ENCODE measurements at regions of chr1 and their contacts with region 1.

Region 1: DNA sequence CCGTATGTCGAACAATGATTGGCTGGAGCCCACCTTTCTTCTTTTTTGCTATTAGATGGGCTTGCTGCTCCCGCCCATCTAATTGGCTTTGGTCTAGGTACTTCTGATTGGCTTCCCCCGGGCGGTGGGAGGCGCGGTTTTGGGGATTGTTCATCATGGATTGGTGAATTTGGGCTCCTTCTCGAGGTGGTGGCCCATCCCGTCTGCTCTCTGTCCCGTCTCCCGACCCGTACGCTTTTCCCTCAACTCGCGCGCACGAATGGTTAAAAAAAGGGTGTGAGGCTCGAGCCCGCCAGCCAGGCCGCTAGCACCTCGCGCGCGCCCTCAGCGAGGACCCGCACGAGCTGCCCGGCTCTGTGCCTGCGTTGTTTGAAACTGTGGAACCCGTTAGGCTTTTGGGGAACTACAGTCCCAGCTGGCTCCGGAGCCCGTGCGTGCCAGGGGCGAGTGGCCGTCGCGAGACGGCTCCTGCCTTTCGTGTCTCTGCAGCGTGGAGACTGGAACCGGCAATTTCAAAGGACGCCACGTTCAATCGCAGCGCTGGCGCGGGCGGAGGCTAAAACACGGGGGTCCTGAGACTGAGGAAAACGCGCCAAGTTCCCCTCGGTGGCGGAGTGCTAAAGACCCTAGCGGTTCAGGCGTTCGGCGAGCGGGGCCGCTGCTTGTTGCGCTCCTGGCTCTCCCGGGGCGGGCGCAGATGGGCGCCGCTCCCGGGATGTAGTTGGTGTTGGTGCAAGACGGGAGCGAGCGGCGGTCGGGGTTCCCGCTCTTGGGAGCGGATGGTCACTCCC is at the start of gene USP1:
- DNase-seq: peak; percentile 99
- ATAC-seq: peak; percentile 79
- H3K4me3 ChIP-seq: peak within 1 kb of the TSS; percentile 87 to 98 (median 97)
- H3K4me3 Mint-ChIP-seq: peak within 1 kb of the TSS; percentile 98
- H3K27ac ChIP-seq: peak within 1 kb of the TSS; percentile 97
- H3K27ac Mint-ChIP-seq: peak within 1 kb of the TSS; percentile 100
- H3K4me1 ChIP-seq: peaks cover 20 to 28% of the 10 kb centered on the region in 2 donors
- H3K4me1 Mint-ChIP-seq: peaks cover 47% of the 10 kb centered on the region
- H3K27me3 ChIP-seq: no peaks in the 10 kb centered on the region
- H3K27me3 Mint-ChIP-seq: no peaks in the 10 kb centered on the region
- CTCF ChIP-seq: no peak
- total RNA-seq, gene USP1: 32.5 and 32.7 TPM in 2 replicates

Region 2: DNA sequence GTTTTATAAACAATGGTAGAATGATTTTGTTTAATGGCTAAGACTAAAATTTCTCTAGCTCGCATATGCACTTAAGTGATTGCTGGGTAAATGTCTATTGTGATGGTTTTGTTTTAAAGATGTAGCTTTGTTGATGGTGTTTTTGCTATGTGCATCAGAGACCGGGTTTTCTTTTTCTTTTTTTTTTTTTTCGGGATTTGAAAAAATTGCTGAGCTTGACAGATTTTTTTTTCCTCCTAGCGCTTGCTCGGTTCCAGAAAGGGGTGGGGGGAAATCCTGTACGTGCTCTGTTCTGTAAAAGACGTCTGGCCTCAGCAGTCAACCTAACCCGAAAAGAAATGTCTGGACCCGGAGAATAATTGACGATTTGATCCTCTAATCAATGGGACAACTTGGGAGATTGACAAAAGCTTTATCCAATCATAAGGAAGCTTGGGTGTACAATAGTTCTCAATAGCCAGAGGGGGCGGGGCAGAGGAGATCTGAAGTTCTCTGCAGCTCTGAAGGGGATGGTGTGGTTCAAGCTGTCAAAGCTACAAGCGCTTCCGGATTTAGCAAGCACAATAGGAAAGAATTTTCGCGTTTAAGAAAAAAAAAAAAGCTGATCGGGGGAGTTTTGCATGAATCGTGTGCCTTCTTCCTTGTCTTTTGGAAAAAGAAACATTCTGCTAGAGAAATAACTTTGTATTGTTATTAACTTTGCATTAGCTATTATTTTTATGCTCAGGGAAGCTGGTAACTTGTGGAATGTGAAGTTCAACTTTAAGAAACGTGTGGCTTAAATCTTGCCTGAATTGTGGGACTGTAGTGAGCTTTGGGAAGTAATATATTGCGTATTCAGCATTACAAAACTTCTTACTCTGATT is 1358.8 kb before region 1 on chr1:
- CTCF ChIA-PET with region 1: no interaction called
- POLR2A ChIA-PET with region 1: interaction called, 6 read pairs
- intact Hi-C with region 1: loop called (anchors 5 kb)
- DNase-seq: peak; percentile 91
- ATAC-seq: peak; percentile 42
- H3K4me3 ChIP-seq: peak overlapping the region; percentile 54 to 98 (median 67)
- H3K4me3 Mint-ChIP-seq: peak overlapping the region; percentile 92
- H3K27ac ChIP-seq: peak overlapping the region; percentile 71 to 83
- H3K27ac Mint-ChIP-seq: peak overlapping the region; percentile 75
- H3K4me1 ChIP-seq: peaks cover 33% of the 10 kb centered on the region in 2 donors
- H3K4me1 Mint-ChIP-seq: peaks cover 36% of the 10 kb centered on the region
- H3K27me3 ChIP-seq: peaks cover 0 to 40% (median 33%) of the 10 kb centered on the region in 4 experiments
- H3K27me3 Mint-ChIP-seq: peaks cover 35% of the 10 kb centered on the region
- CTCF ChIP-seq: no peak

Region 3: DNA sequence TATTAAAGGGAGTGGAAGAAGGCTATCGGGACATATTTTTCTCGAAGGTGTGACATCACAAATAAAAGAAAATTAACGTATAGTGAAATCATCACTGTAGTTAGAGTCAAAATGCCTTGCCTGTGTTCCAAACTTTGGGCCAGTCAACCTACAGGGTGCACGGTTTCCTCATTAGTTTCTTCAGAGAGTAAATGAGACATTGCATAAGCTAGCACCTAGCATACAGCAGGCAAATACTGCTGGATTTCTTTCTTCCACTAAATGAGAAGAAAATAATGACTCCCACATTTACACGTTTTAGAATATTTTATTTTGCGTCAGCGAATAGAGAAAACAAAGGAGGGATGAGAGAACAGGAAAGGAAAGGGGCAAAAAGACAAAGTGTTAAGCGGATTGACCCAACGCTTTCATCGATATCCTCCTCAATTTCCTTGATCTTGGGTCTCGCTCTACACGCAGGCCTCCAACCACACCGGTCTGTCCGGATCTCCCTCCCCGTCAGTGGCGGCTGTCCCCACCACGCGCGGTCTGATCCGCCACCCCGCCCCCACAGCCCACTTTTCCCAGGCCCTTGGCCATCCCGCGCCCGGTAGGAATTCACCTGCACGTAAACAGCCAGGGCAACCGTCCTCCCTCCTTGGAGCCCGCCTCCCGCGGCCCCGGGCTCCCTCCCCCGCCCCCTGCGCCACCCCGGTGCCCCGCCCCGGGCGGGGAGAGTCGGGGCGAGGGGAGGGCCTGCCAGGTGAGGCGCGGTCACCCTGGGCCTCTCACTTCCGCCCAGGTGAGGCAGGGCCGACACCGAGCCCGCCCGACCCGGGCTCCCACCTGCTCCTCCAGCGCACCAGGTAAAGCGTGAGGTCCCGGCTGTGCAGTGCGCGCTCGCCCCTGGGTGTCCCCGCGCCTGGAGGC is 694.7 kb before region 1 on chr1 and contains the start of gene PATJ:
- CTCF ChIA-PET with region 1: no interaction called
- POLR2A ChIA-PET with region 1: no interaction called
- intact Hi-C with region 1: loop called (anchors 5 kb)
- DNase-seq: peak; percentile 68
- ATAC-seq: peak; percentile 82
- H3K4me3 ChIP-seq: peak within 1 kb of the TSS; percentile 54 to 78 (median 75)
- H3K4me3 Mint-ChIP-seq: peak within 1 kb of the TSS; percentile 97
- H3K27ac ChIP-seq: peak within 1 kb of the TSS; percentile 50 to 55
- H3K27ac Mint-ChIP-seq: peak within 1 kb of the TSS; percentile 93
- H3K4me1 ChIP-seq: peaks cover 9 to 13% of the 10 kb centered on the region in 2 donors
- H3K4me1 Mint-ChIP-seq: peaks cover 13% of the 10 kb centered on the region
- H3K27me3 ChIP-seq: no peaks in the 10 kb centered on the region
- H3K27me3 Mint-ChIP-seq: no peaks in the 10 kb centered on the region
- CTCF ChIP-seq: no peak
- total RNA-seq, gene PATJ: 43.3 and 45.3 TPM in 2 replicates

Region 4: GRCh38 chr1:62407405-62408009 is 29.2 kb before region 1 on chr1:
- CTCF ChIA-PET with region 1: no interaction called
- POLR2A ChIA-PET with region 1: no interaction called
- intact Hi-C with region 1: loop called (anchors 1 kb)
- DNase-seq: peak; percentile 52
- ATAC-seq: no peak
- H3K4me3 ChIP-seq: no peak overlapping the region
- H3K4me3 Mint-ChIP-seq: no peak overlapping the region
- H3K27ac ChIP-seq: no peak overlapping the region
- H3K27ac Mint-ChIP-seq: no peak overlapping the region
- H3K4me1 ChIP-seq: no peaks in the 10 kb centered on the region
- H3K4me1 Mint-ChIP-seq: no peaks in the 10 kb centered on the region
- H3K27me3 ChIP-seq: no peaks in the 10 kb centered on the region
- H3K27me3 Mint-ChIP-seq: no peaks in the 10 kb centered on the region
- CTCF ChIP-seq: peak; percentile 86

Region 5: GRCh38 chr1:62687903-62688686 is 251.4 kb after region 1 on chr1 and contains the start of gene DOCK7:
- CTCF ChIA-PET with region 1: no interaction called
- POLR2A ChIA-PET with region 1: no interaction called
- intact Hi-C with region 1: loop called (anchors 5 kb)
- DNase-seq: peak; percentile 75
- ATAC-seq: peak; percentile 70
- H3K4me3 ChIP-seq: peak within 1 kb of the TSS; percentile 77 to 82 (median 80)
- H3K4me3 Mint-ChIP-seq: peak within 1 kb of the TSS; percentile 97
- H3K27ac ChIP-seq: peak within 1 kb of the TSS in 1 of 2 donors; percentile 50
- H3K27ac Mint-ChIP-seq: peak within 1 kb of the TSS; percentile 93
- H3K4me1 ChIP-seq: peaks cover 0 to 9% of the 10 kb centered on the region in 2 donors
- H3K4me1 Mint-ChIP-seq: peaks cover 29% of the 10 kb centered on the region
- H3K27me3 ChIP-seq: no peaks in the 10 kb centered on the region
- H3K27me3 Mint-ChIP-seq: no peaks in the 10 kb centered on the region
- CTCF ChIP-seq: no peak
- total RNA-seq, gene DOCK7: 20.5 and 22.0 TPM in 2 replicates

Region 6: GRCh38 chr1:62800825-62801306 is 364.2 kb after region 1 on chr1:
- CTCF ChIA-PET with region 1: interaction called, 3 read pairs
- POLR2A ChIA-PET with region 1: no interaction called
- intact Hi-C with region 1: loop called (anchors 2 kb)
- DNase-seq: peak; percentile 90
- ATAC-seq: peak; percentile 99
- H3K4me3 ChIP-seq: peak overlapping the region in 3 of 5 experiments; percentile 11 to 53 (median 19)
- H3K4me3 Mint-ChIP-seq: peak overlapping the region; percentile 84
- H3K27ac ChIP-seq: peak overlapping the region; percentile 70 to 83
- H3K27ac Mint-ChIP-seq: peak overlapping the region; percentile 96
- H3K4me1 ChIP-seq: peaks cover 36 to 52% of the 10 kb centered on the region in 2 donors
- H3K4me1 Mint-ChIP-seq: peaks cover 38% of the 10 kb centered on the region
- H3K27me3 ChIP-seq: no peaks in the 10 kb centered on the region
- H3K27me3 Mint-ChIP-seq: no peaks in the 10 kb centered on the region
- CTCF ChIP-seq: no peak

Region 7: DNA sequence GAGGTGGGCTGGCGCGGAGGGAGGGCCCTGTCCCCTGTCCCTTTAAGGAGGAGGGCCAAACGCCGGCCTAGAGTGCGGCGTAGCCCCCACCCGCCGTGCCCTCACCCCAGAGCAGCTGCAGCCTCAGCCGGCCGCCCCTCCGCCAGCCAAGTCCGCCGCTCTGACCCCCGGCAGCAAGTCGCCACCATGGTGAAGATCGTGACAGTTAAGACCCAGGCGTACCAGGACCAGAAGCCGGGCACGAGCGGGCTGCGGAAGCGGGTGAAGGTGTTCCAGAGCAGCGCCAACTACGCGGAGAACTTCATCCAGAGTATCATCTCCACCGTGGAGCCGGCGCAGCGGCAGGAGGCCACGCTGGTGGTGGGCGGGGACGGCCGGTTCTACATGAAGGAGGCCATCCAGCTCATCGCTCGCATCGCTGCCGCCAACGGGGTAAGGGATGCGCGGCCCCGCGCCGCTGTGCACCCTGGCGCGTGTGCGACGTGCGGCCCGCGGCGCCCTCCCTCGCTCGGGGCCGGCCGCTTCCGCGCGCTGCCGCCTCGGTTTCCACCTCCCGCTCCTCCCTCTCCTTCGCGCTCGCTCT is 1156.7 kb after region 1 on chr1 and contains the start of gene PGM1:
- CTCF ChIA-PET with region 1: no interaction called
- POLR2A ChIA-PET with region 1: no interaction called
- intact Hi-C with region 1: loop called (anchors 2 kb)
- DNase-seq: peak; percentile 81
- ATAC-seq: peak; percentile 81
- H3K4me3 ChIP-seq: peak within 1 kb of the TSS; percentile 32 to 92 (median 80)
- H3K4me3 Mint-ChIP-seq: peak within 1 kb of the TSS; percentile 98
- H3K27ac ChIP-seq: peak within 1 kb of the TSS; percentile 78 to 88
- H3K27ac Mint-ChIP-seq: peak within 1 kb of the TSS; percentile 98
- H3K4me1 ChIP-seq: peaks cover 6 to 9% of the 10 kb centered on the region in 2 donors
- H3K4me1 Mint-ChIP-seq: peaks cover 13% of the 10 kb centered on the region
- H3K27me3 ChIP-seq: no peaks in the 10 kb centered on the region
- H3K27me3 Mint-ChIP-seq: no peaks in the 10 kb centered on the region
- CTCF ChIP-seq: no peak
- total RNA-seq, gene PGM1: 13.2 and 17.3 TPM in 2 replicates

Measured in B cell (primary cell).